OCI-LY7 (cell line): ENCODE measurements at regions of chr17 and their contacts with region 1.

Region 1: DNA sequence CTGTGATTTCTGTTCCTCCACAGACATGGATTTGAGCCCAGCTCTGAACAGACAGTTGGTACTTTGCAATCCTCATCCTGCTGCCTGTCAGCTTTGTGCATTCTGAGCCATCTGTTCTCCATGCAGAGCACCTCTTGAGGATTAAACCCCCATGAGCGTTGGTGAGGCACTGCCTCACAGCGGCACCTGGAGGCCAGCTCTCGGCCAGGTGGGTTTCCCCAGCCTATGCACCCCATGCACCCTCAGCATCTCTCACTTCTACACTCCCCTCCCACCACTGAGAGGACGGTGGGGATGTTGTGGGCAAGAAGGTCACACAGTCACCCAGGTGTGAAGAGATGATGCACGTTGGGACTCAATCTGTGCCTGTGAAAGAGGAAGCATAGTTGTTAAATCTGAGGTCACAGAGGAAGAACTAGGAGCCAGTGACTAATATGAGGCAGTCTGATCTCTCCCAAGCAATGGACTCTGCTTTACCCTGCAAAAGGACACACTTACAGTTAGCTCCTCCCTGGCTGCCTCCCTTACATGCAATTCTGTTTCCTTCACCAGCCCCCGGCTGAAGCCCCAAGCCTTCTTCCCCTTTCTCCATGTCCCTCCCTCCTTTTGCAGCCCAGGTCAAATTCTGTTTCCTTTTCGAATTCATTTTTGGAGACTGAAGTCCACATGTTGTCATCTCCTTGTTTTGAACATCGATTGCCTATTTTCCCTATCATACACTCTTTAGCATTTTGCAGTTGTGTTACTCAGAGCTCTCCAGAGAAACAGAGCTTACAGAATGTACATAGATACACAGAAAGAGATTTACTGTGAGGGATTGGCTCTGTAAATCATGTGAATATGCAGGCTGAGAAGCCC is 58.5 kb downstream of the HS3ST3B1 start:
- DNase-seq: peak; percentile 93
- H3K4me3 ChIP-seq: peak overlapping the region; percentile 35
- H3K27ac ChIP-seq: peak overlapping the region; percentile 78
- H3K4me1 ChIP-seq: peaks cover 60% of the 10 kb centered on the region
- CTCF ChIP-seq: peak; percentile 73

Region 2: GRCh38 chr17:14471052-14471451 is 111.7 kb after region 1 on chr17:
- CTCF ChIA-PET with region 1: no interaction called
- POLR2A ChIA-PET with region 1: no interaction called
- intact Hi-C with region 1: no loop called
- DNase-seq: no peak
- H3K4me3 ChIP-seq: no peak overlapping the region
- H3K27ac ChIP-seq: no peak overlapping the region
- H3K4me1 ChIP-seq: no peaks in the 10 kb centered on the region
- CTCF ChIP-seq: no peak

Region 3: DNA sequence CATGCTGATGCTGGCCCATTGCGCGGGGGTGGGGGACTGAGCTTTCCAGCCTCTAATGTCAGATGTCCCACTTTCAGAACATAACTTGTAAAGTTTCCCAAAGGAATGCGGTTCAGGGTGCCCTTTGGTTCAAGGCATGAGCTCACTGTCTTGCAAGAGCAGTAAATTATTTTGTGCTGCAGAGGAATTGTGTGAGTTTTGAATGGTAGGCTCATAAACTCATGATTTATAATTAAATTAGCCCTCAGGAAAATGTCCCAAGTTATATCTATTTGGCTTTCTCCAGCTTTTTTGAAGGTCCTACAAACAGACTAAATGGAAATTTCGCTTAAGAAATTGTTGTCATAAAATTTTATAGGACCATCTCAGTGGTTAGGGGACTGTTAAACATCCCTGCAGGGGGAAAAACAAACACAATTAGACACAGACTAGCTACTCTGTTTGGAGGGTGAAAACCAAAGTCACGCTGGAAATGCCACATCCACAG is 263.3 kb after region 1 on chr17:
- CTCF ChIA-PET with region 1: no interaction called
- POLR2A ChIA-PET with region 1: no interaction called
- intact Hi-C with region 1: loop called (anchors 5 kb)
- DNase-seq: peak; percentile 25
- H3K4me3 ChIP-seq: peak overlapping the region; percentile 48
- H3K27ac ChIP-seq: peak overlapping the region; percentile 99
- H3K4me1 ChIP-seq: peaks cover 59% of the 10 kb centered on the region
- CTCF ChIP-seq: no peak